Activated CD4-positive, alpha-beta memory T cell treated with anti-CD3 and anti-CD28 coated beads for 36 hours (primary cell): ENCODE measurements at regions of chr6 and their contacts with region 1.

Region 1: DNA sequence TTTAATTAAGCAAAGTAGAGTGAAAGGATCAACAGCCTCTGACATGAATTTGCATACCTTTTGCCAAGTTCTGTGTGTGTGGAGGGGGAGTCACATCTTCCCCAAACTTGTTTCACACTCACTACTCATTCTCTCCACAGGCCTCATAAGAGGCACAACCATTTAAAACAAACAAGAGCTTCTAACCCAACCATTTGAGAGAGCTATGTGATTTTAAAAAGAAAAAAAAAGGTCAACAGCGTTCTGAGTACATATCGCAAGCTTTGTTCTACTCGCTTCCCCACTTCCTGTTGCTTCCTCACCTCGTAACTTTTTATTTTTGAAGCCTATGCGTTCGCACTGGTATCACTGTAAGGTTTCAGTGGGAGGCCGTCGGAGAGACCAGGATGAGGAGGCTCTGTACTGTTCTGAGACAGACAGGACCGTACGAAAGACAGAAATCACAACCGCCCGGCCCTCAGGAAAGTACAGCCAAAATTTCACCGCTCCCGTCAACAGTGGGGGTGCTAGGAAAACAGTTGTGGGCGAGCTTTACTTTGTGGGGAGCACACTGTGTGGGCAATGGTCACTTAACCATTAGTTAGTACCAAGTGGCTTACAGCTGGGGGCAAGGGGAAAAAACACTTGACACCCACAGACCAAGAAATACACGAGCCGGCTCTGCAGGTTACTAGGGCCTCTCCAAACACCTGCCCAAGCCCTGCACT is 61.3 kb downstream of the TRERF1 start:
- DNase-seq: peak; percentile 88
- H3K4me3 Mint-ChIP-seq: peak overlapping the region; percentile 71
- H3K27ac Mint-ChIP-seq: peak overlapping the region; percentile 98
- H3K4me1 Mint-ChIP-seq: peaks cover 96% of the 10 kb centered on the region
- H3K27me3 Mint-ChIP-seq: no peaks in the 10 kb centered on the region

Region 2: GRCh38 chr6:42338663-42339218 is 51.6 kb before region 1 on chr6:
- CTCF ChIA-PET with region 1: interaction called, 20 read pairs
- POLR2A ChIA-PET with region 1: interaction called, 38 read pairs
- intact Hi-C with region 1: loop called (anchors 1 kb)
- DNase-seq: peak; percentile 52
- H3K4me3 Mint-ChIP-seq: peak overlapping the region; percentile 47
- H3K27ac Mint-ChIP-seq: peak overlapping the region; percentile 84
- H3K4me1 Mint-ChIP-seq: peaks cover 79% of the 10 kb centered on the region
- H3K27me3 Mint-ChIP-seq: no peaks in the 10 kb centered on the region

Region 3: DNA sequence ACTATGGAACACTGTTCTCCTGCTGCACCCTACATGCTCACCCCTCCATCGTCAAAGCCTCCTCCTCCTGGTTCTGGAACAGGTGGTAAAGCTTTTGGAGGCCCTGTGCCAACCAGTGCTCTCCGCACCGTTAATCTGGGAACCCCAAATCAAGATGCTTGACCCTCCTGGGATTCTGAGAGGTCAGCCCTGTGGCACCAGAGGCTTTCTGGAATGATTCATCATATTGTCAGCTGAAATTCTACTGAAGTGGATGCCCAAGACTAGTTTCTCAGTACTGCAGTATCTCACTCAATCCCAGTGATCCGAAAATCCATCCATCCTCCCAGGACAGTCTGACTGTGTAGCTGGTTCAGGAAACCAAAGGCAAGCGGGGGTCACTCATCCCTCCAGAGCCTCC is 31.4 kb before region 1 on chr6:
- CTCF ChIA-PET with region 1: no interaction called
- POLR2A ChIA-PET with region 1: interaction called, 17 read pairs
- intact Hi-C with region 1: loop called (anchors 1 kb)
- DNase-seq: no peak
- H3K4me3 Mint-ChIP-seq: no peak overlapping the region
- H3K27ac Mint-ChIP-seq: peak overlapping the region; percentile 82
- H3K4me1 Mint-ChIP-seq: peaks cover 25% of the 10 kb centered on the region
- H3K27me3 Mint-ChIP-seq: no peaks in the 10 kb centered on the region

Region 4: GRCh38 chr6:42374018-42374659 is 16.2 kb before region 1 on chr6:
- CTCF ChIA-PET with region 1: interaction called, 7 read pairs
- POLR2A ChIA-PET with region 1: interaction called, 11 read pairs
- intact Hi-C with region 1: loop called (anchors 1 kb)
- DNase-seq: peak; percentile 53
- H3K4me3 Mint-ChIP-seq: no peak overlapping the region
- H3K27ac Mint-ChIP-seq: peak overlapping the region; percentile 72
- H3K4me1 Mint-ChIP-seq: peaks cover 69% of the 10 kb centered on the region
- H3K27me3 Mint-ChIP-seq: no peaks in the 10 kb centered on the region

Region 5: DNA sequence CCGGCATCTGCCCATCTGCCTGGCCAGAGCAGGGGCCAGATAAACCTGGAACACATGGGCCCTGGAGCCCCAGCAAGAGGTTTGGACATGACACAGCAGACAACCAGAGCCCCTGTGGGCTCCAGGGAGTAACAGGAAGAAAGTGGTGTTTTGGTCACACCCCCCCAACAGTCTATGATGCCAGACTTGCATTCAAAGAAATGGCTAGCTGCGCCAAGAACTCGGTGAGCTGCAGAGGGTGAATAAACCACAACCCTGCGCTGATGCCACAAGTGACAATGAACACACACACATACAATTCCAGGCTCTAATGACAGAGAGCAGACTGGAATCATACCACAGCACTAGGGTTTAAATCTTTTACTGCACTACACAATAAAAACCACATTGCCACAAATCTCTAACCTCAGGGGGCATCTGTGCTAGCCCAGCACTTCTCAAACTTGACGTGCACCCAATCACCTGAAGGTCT is 27.3 kb after region 1 on chr6:
- CTCF ChIA-PET with region 1: no interaction called
- POLR2A ChIA-PET with region 1: interaction called, 6 read pairs
- intact Hi-C with region 1: loop called (anchors 2 kb)
- DNase-seq: peak; percentile 76
- H3K4me3 Mint-ChIP-seq: no peak overlapping the region
- H3K27ac Mint-ChIP-seq: peak overlapping the region; percentile 50
- H3K4me1 Mint-ChIP-seq: peaks cover 59% of the 10 kb centered on the region
- H3K27me3 Mint-ChIP-seq: no peaks in the 10 kb centered on the region

Region 6: GRCh38 chr6:42520786-42521607 is 130.6 kb after region 1 on chr6:
- CTCF ChIA-PET with region 1: no interaction called
- POLR2A ChIA-PET with region 1: interaction called, 6 read pairs
- intact Hi-C with region 1: loop called (anchors 5 kb)
- DNase-seq: peak; percentile 51
- H3K4me3 Mint-ChIP-seq: no peak overlapping the region
- H3K27ac Mint-ChIP-seq: peak overlapping the region; percentile 82
- H3K4me1 Mint-ChIP-seq: peaks cover 21% of the 10 kb centered on the region
- H3K27me3 Mint-ChIP-seq: peaks cover 1% of the 10 kb centered on the region